Common myeloid progenitor, CD34-positive (primary cell): ENCODE measurements at regions of chr11 and their contacts with region 1.

Region 1: DNA sequence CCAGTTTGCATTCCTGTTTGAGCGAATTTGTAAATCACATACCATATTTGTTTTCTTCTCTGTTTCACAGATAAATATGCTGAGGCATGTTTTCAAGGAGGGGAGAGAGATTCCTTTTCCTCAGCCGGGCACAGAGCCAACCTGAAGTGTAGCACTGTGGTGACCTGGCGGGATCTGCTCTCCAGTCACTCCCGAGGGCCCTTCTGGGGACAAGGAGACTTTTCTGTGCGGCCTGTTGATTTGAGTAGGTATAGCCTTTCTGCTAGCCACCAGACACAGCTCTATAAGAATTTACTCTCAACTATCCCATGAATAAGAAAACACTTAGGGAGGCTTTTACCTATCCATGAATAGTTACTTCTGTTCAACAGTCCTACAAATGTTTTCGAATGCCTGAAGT is 63.5 kb upstream of the FDX1 start:
- DNase-seq: no peak
- H3K4me3 ChIP-seq: no peak overlapping the region
- H3K27ac ChIP-seq: no peak overlapping the region
- H3K4me1 ChIP-seq: peaks cover 0 to 9% (median 5%) of the 10 kb centered on the region in 4 experiments
- H3K27me3 ChIP-seq: no peaks in the 10 kb centered on the region

Region 2: GRCh38 chr11:110376711-110377324 is 10.5 kb after region 1 on chr11:
- CTCF ChIA-PET with region 1: interaction called, 12 read pairs
- POLR2A ChIA-PET with region 1: no interaction called
- DNase-seq: peak; percentile 74 to 90 (median 87)
- H3K4me3 ChIP-seq: peak overlapping the region in 5 of 7 experiments; percentile 26 to 78 (median 65)
- H3K27ac ChIP-seq: peak overlapping the region in 1 of 2 experiments; percentile 47
- H3K4me1 ChIP-seq: peaks cover 0 to 9% (median 2%) of the 10 kb centered on the region in 4 experiments
- H3K27me3 ChIP-seq: no peaks in the 10 kb centered on the region